ENCODE measurements at regions of chr2 and their contacts with region 1.

Region 1: GRCh38 chr2:112054847-112055729 is at the start of gene TMEM87B:
- DNase-seq: peak; percentile 98
- H3K4me3 ChIP-seq: peak within 1 kb of the TSS; percentile 90 to 95
- H3K27ac ChIP-seq: peak within 1 kb of the TSS; percentile 93 to 96
- H3K4me1 ChIP-seq: peaks cover 13% of the 10 kb centered on the region
- H3K27me3 ChIP-seq: no peaks in the 10 kb centered on the region
- CTCF ChIP-seq: no peak
- POLR2A ChIP-seq: peak; percentile 71
- total RNA-seq, gene TMEM87B: 21.5 to 60.7 TPM

Region 2: GRCh38 chr2:111887819-111888223 is 167.3 kb before region 1 on chr2:
- intact Hi-C with region 1: loop called (anchors 2 kb)
- DNase-seq: peak; percentile 86
- H3K4me3 ChIP-seq: no peak overlapping the region
- H3K27ac ChIP-seq: no peak overlapping the region
- H3K4me1 ChIP-seq: no peaks in the 10 kb centered on the region
- H3K27me3 ChIP-seq: no peaks in the 10 kb centered on the region
- CTCF ChIP-seq: peak; percentile 60 to 86 (median 78)
- POLR2A ChIP-seq: no peak

Region 3: DNA sequence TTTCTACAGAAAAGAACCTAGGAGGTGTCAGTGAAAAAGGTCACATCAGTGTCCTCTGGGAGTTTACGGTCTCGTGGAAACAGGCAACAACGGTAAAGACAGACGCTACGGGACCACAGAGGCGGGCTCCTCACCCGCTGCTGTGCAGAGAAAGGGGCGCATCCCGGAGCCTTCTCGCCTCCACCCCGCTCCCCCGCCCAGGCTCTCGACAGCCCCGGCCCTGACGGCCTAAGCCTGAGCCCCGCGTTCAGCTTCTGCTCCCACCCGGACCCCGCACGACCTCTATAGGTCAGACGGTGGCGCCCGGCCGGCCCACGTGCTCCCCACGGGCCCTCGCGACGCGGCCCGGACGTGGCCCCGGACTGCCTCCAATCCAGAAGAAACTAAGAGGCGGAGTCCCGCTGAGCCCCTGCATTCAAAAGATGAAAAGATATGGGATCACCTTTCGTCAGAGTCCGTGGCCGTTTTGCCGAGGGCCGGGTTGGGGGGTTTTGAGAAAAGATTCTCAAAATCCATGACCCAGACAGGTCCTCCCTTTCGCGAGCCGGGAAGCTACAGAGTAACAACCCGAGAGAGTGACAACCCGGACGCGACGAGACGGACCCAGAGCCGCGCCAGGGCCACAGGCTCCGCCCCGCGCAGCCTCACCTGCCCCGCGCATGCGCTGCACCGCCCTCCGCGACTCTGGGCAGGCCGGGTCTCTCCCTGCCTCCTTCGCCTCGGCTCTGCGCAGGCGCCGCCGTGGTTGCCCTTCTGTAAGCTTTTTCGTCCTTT is 199.6 kb after region 1 on chr2 and contains the start of gene ZC3H8:
- intact Hi-C with region 1: loop called (anchors 5 kb)
- DNase-seq: peak; percentile 92
- H3K4me3 ChIP-seq: peak within 1 kb of the TSS; percentile 55 to 73
- H3K27ac ChIP-seq: peak within 1 kb of the TSS; percentile 84 to 85
- H3K4me1 ChIP-seq: peaks cover 6% of the 10 kb centered on the region
- H3K27me3 ChIP-seq: no peaks in the 10 kb centered on the region
- CTCF ChIP-seq: no peak
- POLR2A ChIP-seq: peak; percentile 84
- total RNA-seq, gene ZC3H8: 3.3 to 4.9 TPM

Region 4: GRCh38 chr2:112433932-112434730 is 379.0 kb after region 1 on chr2:
- intact Hi-C with region 1: loop called (anchors 10 kb)
- DNase-seq: no peak
- H3K4me3 ChIP-seq: no peak overlapping the region
- H3K27ac ChIP-seq: no peak overlapping the region
- H3K4me1 ChIP-seq: no peaks in the 10 kb centered on the region
- H3K27me3 ChIP-seq: no peaks in the 10 kb centered on the region
- CTCF ChIP-seq: no peak
- POLR2A ChIP-seq: no peak

Region 5: GRCh38 chr2:112584134-112584890 is 529.2 kb after region 1 on chr2 and contains the start of gene CHCHD5:
- intact Hi-C with region 1: loop called (anchors 10 kb)
- DNase-seq: peak; percentile 95
- H3K4me3 ChIP-seq: peak within 1 kb of the TSS; percentile 47 to 51
- H3K27ac ChIP-seq: peak within 1 kb of the TSS; percentile 90 to 92
- H3K4me1 ChIP-seq: peaks cover 5% of the 10 kb centered on the region
- H3K27me3 ChIP-seq: no peaks in the 10 kb centered on the region
- CTCF ChIP-seq: peak in 3 of 4 experiments; percentile 29 to 54 (median 50)
- POLR2A ChIP-seq: peak; percentile 38
- total RNA-seq, gene CHCHD5: 26.3 to 35.4 TPM

Measured in prostate gland (tissue), 2 donors.